ENCODE measurements at regions of chr12 and their contacts with region 1.

Region 1: DNA sequence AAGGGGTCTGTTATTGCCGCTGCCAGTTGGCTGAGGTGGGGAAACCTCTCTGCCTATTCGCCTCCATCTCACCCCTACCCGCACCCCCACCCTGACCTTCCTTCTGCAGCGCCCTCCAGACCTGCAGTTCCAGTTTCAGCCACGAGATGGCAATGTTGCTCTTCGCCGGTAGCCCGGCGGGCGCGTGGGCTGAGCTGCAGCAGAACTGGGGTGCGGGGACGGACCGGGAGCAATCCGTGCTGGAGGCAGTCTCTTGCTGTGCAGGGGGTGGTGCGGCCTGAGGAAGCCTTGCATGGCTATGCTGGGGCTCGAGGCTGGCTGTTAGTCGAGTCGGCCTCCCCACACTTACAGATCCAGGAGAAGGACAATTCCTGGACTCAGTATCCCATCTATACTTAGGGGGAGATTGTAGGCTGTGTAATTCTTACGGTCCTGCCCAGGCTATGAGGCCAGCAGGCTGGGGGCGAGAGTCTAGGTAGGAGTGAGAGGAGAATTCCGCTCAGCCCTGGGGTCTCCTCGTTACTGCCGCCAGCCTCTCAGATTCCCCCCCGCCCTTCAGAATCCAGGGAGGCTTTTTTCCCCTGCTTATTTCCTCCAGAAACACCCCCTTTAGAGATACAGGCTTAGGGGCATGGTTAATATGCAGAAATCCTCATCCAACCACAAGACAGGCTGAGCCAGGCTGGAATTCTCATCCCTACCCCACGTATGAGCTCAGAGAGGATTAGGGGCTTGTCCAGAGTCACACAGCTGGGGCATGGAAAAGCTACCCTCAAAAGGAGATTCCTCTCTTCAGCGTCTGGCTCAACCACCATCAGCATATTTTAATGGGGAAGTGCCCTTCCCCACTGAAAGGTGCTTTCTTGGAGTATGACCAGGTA is 118.2 kb downstream of the AACS start:
- DNase-seq: peak; percentile 80
- H3K4me3 ChIP-seq: no peak overlapping the region
- H3K27ac ChIP-seq: no peak overlapping the region
- H3K4me1 ChIP-seq: peaks cover 0 to 29% (median 26%) of the 10 kb centered on the region in 4 donors
- H3K27me3 ChIP-seq: peaks cover 7 to 35% (median 16%) of the 10 kb centered on the region in 3 donors
- CTCF ChIP-seq: peak; percentile 90 to 99 (median 94)
- EP300 ChIP-seq: no peak
- POLR2A ChIP-seq: no peak

Region 2: DNA sequence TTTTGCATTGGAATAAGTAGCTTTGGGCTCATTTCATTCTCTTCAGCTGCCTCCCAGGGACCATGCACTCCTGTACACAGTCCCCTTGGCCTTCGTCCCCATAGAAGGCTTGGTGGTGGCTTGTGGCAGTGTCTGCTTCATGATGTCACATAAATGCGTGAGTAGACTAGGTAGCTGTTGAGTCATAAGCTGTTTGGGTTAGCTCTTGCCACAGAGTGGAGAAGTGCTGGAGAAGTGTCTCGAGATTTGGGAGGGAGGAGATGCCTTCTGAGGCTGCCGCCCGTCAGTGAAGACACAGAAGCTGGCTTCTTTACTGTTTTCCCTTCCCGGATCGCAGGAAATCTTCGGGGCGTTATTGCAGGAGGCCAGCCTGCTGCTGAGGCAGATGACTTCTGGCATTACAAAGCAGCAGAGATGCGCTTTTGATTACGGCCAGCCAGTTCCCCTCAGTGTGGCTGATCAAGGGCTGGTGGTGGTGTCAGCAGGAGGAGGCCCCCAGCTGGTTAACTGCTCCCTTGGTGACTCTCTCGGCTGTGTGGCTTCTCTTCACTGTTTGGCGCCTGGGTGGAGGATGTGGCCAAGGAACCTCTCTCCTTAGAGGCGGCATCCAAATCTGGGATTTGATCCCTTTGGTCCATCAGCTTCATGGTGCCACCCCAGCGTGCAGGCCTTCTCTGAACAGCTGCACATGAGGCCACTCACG is 50.6 kb before region 1 on chr12:
- intact Hi-C with region 1: no loop called
- DNase-seq: no peak
- H3K4me3 ChIP-seq: no peak overlapping the region
- H3K27ac ChIP-seq: no peak overlapping the region
- H3K4me1 ChIP-seq: no peaks in the 10 kb centered on the region
- H3K27me3 ChIP-seq: no peaks in the 10 kb centered on the region
- CTCF ChIP-seq: no peak
- EP300 ChIP-seq: no peak
- POLR2A ChIP-seq: no peak

Region 3: GRCh38 chr12:125402874-125403789 is 219.7 kb after region 1 on chr12:
- intact Hi-C with region 1: loop called (anchors 5 kb)
- DNase-seq: no peak
- H3K4me3 ChIP-seq: no peak overlapping the region
- H3K27ac ChIP-seq: no peak overlapping the region
- H3K4me1 ChIP-seq: no peaks in the 10 kb centered on the region
- H3K27me3 ChIP-seq: no peaks in the 10 kb centered on the region
- CTCF ChIP-seq: peak in 2 of 4 experiments; percentile 21 to 30
- EP300 ChIP-seq: no peak
- POLR2A ChIP-seq: no peak

Measured in sigmoid colon (tissue), 7 donors.